Activated CD8-positive, alpha-beta T cell treated with anti-CD3 and anti-CD28 coated beads for 36 hours (primary cell): ENCODE measurements at regions of chr5 and their contacts with region 1.

Region 1: DNA sequence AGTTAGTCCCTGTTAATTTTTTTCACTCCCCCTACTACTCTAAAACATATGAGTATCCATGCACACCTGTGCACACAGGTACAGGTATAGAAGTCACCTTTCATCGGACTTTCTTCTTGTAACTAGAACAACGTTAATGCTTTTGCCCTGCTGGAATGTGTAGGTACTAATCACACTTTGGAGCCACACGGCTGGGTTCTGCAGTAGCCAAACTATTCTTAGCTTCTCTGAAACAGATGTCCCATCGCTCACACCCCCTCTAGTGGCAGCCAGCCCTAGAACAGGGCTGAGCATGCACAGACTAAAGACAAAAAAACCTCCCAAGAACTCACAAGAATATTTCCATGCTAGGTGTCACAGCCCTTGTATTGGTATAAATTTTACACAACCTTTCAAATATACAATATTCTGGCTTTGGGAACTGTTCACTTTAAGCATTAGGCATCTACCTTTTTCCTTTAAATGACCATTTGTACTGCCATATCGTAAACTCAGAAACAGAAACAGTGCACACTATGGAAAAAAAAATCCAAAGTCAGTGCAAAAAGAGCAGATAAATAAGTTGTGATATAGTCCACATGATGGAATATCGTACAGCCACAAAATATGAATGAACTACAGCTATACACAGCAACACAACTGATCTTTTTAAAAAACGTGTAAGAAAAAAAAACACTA is 64.0 kb downstream of the RETREG1 start:
- DNase-seq: peak; percentile 84
- ATAC-seq: peak; percentile 91
- H3K4me3 Mint-ChIP-seq: no peak overlapping the region
- H3K27ac Mint-ChIP-seq: no peak overlapping the region
- H3K4me1 Mint-ChIP-seq: peaks cover 36% of the 10 kb centered on the region
- H3K27me3 Mint-ChIP-seq: no peaks in the 10 kb centered on the region
- CTCF ChIP-seq: peak; percentile 84

Region 2: GRCh38 chr5:16275458-16275857 is 277.3 kb before region 1 on chr5:
- CTCF ChIA-PET with region 1: no interaction called
- POLR2A ChIA-PET with region 1: no interaction called
- intact Hi-C with region 1: no loop called
- DNase-seq: no peak
- ATAC-seq: no peak
- H3K4me3 Mint-ChIP-seq: no peak overlapping the region
- H3K27ac Mint-ChIP-seq: no peak overlapping the region
- H3K4me1 Mint-ChIP-seq: no peaks in the 10 kb centered on the region
- H3K27me3 Mint-ChIP-seq: peaks cover 2% of the 10 kb centered on the region
- CTCF ChIP-seq: no peak

Region 3: GRCh38 chr5:16456103-16456832 is 96.5 kb before region 1 on chr5:
- CTCF ChIA-PET with region 1: interaction called, 14 read pairs
- POLR2A ChIA-PET with region 1: no interaction called
- intact Hi-C with region 1: no loop called
- DNase-seq: peak; percentile 61
- ATAC-seq: peak; percentile 88
- H3K4me3 Mint-ChIP-seq: peak overlapping the region; percentile 22
- H3K27ac Mint-ChIP-seq: peak overlapping the region; percentile 90
- H3K4me1 Mint-ChIP-seq: peaks cover 56% of the 10 kb centered on the region
- H3K27me3 Mint-ChIP-seq: no peaks in the 10 kb centered on the region
- CTCF ChIP-seq: peak; percentile 81

Region 4: DNA sequence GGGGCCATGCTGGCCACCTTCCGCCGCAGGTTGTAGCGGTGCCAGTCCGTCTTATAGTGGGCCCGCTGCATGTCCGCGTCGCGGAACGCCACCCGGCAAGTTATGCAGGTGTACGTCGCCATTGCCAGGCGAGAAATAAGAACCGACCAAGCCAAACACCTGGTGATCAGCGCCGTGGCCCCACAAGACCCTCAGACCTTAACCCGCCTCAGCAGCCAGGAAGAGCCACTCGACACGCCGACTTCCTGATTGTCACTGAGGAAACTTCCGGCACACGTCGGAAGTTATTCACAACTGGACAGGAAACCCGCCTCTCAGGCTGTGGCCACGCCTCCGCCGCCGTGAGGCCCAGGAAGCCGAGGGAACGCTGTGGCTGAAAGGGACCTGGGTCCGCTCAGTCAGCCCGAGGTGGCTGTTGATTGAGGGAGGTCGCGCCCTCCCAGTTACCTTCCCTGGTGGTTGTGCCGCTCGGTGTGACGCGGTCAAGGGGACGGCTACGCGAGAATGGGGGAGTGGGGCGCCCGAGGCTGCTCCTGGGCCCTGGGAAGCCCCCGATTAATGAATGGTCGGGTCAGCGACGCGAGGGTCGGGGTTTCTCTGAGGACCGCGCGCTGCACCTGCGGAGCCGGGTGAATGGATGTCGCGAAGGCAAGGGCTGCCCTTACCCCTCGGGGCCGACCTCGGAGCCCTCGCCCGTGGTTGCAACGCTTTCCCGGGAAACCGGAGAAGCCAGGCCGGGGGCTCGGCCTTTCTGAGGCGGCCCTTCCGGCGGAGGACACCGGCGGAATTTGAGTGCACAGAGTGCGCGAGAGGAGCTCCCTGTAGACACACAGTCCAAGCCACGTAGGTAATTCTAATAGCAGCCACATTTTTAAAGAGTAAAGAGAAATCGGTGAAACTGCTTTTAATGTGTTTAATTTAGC is 87.0 kb before region 1 on chr5 and contains the start of gene ZNF622:
- CTCF ChIA-PET with region 1: interaction called, 8 read pairs
- POLR2A ChIA-PET with region 1: no interaction called
- intact Hi-C with region 1: loop called (anchors 5 kb)
- DNase-seq: peak; percentile 94
- ATAC-seq: peak; percentile 84
- H3K4me3 Mint-ChIP-seq: peak within 1 kb of the TSS; percentile 97
- H3K27ac Mint-ChIP-seq: peak within 1 kb of the TSS; percentile 96
- H3K4me1 Mint-ChIP-seq: peaks cover 71% of the 10 kb centered on the region
- H3K27me3 Mint-ChIP-seq: no peaks in the 10 kb centered on the region
- CTCF ChIP-seq: no peak
- total RNA-seq, gene ZNF622: 36.7 to 38.4 TPM

Region 5: DNA sequence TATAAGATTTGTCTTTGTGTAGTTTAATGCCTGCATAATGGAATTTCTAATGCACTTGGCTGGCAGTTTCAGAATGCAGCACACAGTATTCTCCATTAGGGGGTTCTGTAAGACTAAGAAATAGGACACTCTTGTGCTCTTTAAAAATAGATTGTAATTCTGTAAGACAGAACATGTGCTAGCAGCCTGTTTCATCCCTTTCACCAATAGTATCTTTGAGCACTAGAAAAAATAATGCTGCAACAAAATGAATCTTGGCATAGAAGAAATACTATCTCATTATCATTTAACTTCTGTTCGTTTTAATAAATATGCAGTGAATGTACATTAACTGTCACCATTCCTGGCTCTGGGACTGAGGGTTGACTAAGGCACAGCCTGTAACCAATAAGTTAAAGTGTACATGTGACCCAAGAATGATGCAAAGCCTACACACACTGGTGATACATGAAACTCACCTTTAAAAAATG is 63.4 kb before region 1 on chr5:
- CTCF ChIA-PET with region 1: interaction called, 31 read pairs
- POLR2A ChIA-PET with region 1: no interaction called
- intact Hi-C with region 1: loop called (anchors 2 kb)
- DNase-seq: no peak
- ATAC-seq: peak; percentile 84
- H3K4me3 Mint-ChIP-seq: no peak overlapping the region
- H3K27ac Mint-ChIP-seq: no peak overlapping the region
- H3K4me1 Mint-ChIP-seq: peaks cover 30% of the 10 kb centered on the region
- H3K27me3 Mint-ChIP-seq: no peaks in the 10 kb centered on the region
- CTCF ChIP-seq: peak; percentile 49

Region 6: GRCh38 chr5:16539169-16539721 is 13.6 kb before region 1 on chr5:
- CTCF ChIA-PET with region 1: interaction called, 22 read pairs
- POLR2A ChIA-PET with region 1: no interaction called
- intact Hi-C with region 1: no loop called
- DNase-seq: no peak
- ATAC-seq: no peak
- H3K4me3 Mint-ChIP-seq: no peak overlapping the region
- H3K27ac Mint-ChIP-seq: no peak overlapping the region
- H3K4me1 Mint-ChIP-seq: peaks cover 53% of the 10 kb centered on the region
- H3K27me3 Mint-ChIP-seq: no peaks in the 10 kb centered on the region
- CTCF ChIP-seq: no peak

Region 7: DNA sequence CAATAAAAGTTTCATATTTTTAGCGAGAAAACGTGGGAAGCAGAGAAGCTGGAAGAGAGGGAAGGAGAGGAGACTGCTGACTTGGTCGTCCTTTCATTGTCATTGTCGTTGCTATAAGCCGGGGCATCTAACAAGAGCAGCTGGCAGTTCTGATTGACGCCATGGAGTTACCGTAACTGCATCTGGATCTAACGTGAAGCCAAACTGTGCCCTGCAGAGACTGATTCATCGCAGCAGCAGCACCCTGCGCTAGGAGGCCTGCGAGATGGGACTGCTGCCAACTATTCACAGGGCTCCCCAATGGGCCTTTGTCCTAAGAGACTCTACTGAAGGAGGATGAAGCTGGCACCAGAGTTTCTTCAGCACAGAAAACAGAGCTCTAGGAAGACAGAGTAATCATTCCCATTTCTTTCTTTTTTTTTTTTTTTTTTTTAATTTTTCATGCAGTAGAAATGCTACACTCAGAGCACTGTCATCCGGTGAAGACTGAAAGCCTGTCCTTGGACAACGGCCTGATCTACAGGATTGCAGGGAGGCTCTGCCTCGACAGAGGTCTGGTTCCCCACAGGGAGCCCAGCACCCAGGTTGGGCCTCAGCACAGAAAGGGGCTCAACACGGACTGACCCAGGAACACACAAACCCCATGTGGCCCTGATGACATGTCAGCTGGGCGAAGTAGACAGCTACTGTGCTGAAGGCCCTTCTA is 16.2 kb after region 1 on chr5:
- CTCF ChIA-PET with region 1: interaction called, 19 read pairs
- POLR2A ChIA-PET with region 1: no interaction called
- intact Hi-C with region 1: no loop called
- DNase-seq: no peak
- ATAC-seq: no peak
- H3K4me3 Mint-ChIP-seq: no peak overlapping the region
- H3K27ac Mint-ChIP-seq: no peak overlapping the region
- H3K4me1 Mint-ChIP-seq: peaks cover 32% of the 10 kb centered on the region
- H3K27me3 Mint-ChIP-seq: no peaks in the 10 kb centered on the region
- CTCF ChIP-seq: no peak

Region 8: DNA sequence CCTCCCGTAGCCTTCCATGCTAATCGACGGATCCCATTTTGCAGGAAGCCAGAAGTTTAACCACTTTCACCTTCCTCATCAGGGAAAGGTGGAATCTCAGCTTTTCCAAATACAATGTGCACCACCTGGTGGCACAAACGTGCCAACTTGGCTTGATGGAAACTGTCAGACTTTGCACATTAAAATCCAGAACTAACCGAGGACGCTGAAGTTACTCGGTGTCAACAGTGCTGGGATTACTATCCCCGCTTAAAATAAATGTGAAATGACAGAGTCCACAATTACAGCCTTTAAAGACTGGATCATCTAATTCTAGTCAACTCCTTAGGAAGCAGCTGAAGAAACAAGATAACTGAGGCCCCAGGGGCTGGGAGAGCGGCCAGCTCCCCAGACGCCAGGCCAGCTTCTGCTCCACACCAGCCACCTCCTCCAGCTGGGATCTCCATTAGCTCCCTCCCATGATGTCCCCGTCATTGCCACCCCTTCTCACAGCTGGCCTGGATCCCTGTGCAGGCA is 114.1 kb after region 1 on chr5:
- CTCF ChIA-PET with region 1: interaction called, 11 read pairs
- POLR2A ChIA-PET with region 1: no interaction called
- intact Hi-C with region 1: no loop called
- DNase-seq: peak; percentile 51
- ATAC-seq: peak; percentile 34
- H3K4me3 Mint-ChIP-seq: no peak overlapping the region
- H3K27ac Mint-ChIP-seq: no peak overlapping the region
- H3K4me1 Mint-ChIP-seq: peaks cover 5% of the 10 kb centered on the region
- H3K27me3 Mint-ChIP-seq: no peaks in the 10 kb centered on the region
- CTCF ChIP-seq: peak; percentile 60